ENCODE measurements at regions of chr5 and their contacts with region 1.

Region 1: DNA sequence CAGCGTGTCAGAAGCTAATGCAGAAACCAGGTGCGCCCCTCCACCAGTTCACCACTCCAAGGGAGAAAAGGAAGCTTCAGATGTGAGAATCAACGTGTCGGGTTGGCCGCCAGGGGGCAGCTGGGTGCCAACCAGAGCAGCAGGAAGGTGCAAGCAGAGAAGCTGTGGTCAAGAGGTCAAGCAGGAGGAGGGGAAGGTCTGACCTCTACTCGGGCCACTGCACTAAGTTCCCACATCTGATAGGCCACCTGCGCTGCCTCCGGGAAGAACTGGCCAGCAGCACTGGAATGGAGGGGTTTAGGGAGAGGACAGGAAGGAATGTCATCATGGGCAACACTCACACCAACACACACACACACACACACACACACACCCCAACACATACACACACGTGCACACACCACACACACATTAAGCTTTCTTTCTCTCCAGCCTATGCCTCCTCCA is 31.4 kb downstream of the ANXA6 start:
- DNase-seq: peak; percentile 92

Region 2: DNA sequence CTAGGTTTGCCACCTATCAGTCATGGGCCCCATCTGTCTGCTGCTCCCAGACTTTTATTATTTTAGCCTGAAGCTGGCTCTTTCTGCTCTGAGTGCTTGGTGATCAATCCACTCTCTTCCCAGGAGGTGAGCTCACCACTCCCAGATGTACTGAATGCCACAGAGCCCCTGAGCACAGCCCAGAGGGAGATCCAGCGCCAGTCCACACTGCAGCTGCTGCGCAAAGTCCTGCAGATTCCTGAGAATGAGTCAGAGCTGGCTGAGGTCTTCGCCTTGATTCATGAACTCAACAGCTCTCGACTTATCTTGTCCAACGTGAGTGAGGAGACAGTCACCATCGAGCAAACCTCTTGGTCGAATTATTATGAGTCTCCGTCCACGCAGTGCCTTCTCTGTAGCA is 1089.7 kb before region 1 on chr5:
- intact Hi-C with region 1: loop called in 1 of 2 experiments (anchors 10 kb)
- DNase-seq: peak; percentile 87

Region 3: GRCh38 chr5:151093476-151093889 is 32.7 kb before region 1 on chr5:
- intact Hi-C with region 1: no loop called
- DNase-seq: no peak

Region 4: GRCh38 chr5:151164686-151165392 is 38.6 kb after region 1 on chr5:
- intact Hi-C with region 1: loop called (anchors 5 kb)
- DNase-seq: peak; percentile 89

Region 5: GRCh38 chr5:151239237-151239861 is 113.1 kb after region 1 on chr5:
- intact Hi-C with region 1: loop called in 1 of 2 experiments (anchors 5 kb)
- DNase-seq: peak; percentile 95